Caco-2 (cell line): ENCODE measurements at regions of chr19 and their contacts with region 1.

Region 1: DNA sequence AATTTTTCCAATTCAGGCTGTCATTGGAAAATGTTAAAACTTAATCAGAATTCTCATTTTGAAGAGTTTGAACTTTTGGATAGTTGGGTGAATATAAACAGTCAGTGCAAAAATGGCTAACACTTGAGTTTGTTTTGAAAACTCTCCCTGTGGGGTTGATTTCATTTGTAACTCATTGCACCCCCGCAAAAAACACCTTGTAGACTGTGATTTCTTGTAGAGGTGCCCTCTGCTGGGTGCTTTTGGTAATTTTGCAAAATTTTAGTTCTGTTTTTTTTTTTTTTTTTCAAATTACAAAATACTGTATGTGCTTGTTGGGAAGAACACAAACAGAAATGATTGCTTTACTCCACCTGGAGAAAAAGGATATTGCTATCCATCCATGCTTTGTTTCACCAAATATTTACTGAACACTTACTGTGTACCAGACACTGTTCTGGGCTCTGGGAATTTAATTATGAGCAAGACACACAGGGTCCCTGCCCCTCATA is 28.2 kb upstream of the GPI start:
- DNase-seq: peak in 1 of 2 experiments; percentile 52
- H3K4me3 ChIP-seq: no peak overlapping the region
- H3K4me3 Mint-ChIP-seq: no peak overlapping the region
- H3K27ac Mint-ChIP-seq: no peak overlapping the region
- H3K4me1 ChIP-seq: peaks cover under 1% of the 10 kb centered on the region; the same call in 1 of the 2 replicates
- H3K4me1 Mint-ChIP-seq: no peaks in the 10 kb centered on the region
- H3K27me3 ChIP-seq: no peaks in the 10 kb centered on the region
- H3K27me3 Mint-ChIP-seq: no peaks in the 10 kb centered on the region
- CTCF ChIP-seq: peak; percentile 70 to 83

Region 2: DNA sequence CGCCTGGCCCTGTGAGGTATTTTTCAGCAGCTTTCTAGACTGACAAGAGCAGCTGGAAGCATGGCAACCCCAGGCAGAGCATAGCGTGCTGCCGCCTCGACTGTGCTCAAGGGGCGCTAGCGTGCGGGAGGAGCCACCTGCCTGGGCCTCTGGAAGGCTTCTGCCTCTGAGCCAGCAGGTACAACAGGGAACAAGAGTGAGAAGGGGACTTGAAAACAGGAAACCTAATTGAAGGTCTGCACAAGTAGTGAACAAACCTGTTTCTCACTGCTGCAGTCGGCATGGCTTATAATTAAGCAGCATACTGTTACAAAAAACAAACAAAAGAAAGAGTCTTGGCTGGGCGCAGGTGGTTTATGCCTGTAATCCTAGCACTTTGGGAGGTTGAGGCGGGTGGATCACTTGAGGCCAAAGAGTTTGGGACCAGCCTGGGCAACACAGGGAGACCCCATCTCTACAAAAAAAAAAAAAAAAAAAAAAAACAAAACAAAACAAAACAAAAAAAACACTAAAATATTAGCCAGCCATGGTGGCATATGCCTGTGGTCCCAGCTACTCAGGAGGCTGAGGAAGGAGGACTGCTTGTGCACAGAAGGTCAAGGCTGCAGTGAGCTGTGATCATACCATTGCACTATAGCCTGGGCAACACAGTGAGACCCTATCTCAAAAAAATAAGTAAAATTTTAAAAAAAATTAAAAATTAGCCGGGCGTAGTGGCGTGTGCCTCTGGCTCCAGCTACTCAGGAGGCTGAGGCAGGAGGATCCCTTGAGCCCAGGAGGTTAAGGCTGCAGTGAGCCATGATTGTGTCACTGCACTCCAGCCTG is 95.1 kb before region 1 on chr19:
- CTCF ChIA-PET with region 1: no interaction called
- POLR2A ChIA-PET with region 1: no interaction called
- intact Hi-C with region 1: loop called (anchors 5 kb)
- DNase-seq: peak; percentile 78 to 79
- H3K4me3 ChIP-seq: no peak overlapping the region
- H3K4me3 Mint-ChIP-seq: no peak overlapping the region
- H3K27ac Mint-ChIP-seq: peak overlapping the region; percentile 46
- H3K4me1 ChIP-seq: no peaks in the 10 kb centered on the region
- H3K4me1 Mint-ChIP-seq: peaks cover 15% of the 10 kb centered on the region
- H3K27me3 ChIP-seq: no peaks in the 10 kb centered on the region
- H3K27me3 Mint-ChIP-seq: no peaks in the 10 kb centered on the region
- CTCF ChIP-seq: peak; percentile 53 to 63

Region 3: DNA sequence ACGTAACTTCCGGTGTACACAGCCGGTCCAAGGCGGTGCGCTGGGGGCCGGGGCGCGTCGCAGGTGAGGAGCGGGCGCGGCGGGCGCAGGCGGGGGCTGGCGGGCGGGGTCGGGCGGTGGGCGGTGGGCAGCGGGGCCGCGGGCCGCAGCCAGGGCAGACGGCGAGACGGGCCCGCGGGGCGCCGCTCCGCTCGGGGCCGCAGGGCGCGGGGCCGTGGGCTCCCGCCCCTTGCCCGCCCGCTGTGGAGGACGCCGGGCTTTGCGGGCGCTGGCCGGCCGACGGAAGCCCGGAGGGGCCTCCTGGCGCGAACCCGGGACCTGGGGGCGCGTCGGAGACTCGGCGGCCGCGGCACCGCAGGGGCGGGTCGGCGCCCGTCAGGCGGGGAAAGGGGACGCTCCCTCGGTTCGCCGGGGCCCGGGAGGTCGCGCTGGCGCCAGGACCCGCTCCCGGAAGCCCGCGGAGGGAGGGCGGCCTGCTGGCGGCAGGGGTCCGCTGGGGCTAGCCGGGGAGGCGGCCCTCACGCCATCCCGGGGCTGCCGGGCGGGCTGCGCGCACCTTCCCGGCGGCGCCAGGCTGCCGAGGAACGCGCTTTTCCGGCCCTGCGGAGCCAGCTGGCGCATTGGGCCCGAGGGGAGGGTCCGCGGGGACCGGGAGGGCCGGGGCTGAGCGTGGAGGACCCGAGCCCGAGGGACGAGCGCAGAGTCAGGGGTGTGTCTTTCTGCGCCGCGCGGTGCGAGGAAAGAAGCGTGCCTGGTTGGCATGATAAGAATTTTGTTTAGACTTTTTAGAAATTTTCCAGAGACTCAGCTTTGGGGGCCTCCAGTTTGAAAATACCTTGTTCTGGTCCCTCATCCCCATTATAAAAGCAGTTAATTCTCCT is 82.0 kb before region 1 on chr19 and contains the start of gene GARRE1:
- CTCF ChIA-PET with region 1: interaction called, 4 read pairs
- POLR2A ChIA-PET with region 1: no interaction called
- intact Hi-C with region 1: loop called (anchors 5 kb)
- DNase-seq: peak; percentile 65 to 89
- H3K4me3 ChIP-seq: peak within 1 kb of the TSS; percentile 80
- H3K4me3 Mint-ChIP-seq: peak within 1 kb of the TSS; percentile 83
- H3K27ac Mint-ChIP-seq: peak within 1 kb of the TSS; percentile 91
- H3K4me1 ChIP-seq: peaks cover 26% of the 10 kb centered on the region
- H3K4me1 Mint-ChIP-seq: peaks cover 15% of the 10 kb centered on the region
- H3K27me3 ChIP-seq: no peaks in the 10 kb centered on the region
- H3K27me3 Mint-ChIP-seq: no peaks in the 10 kb centered on the region
- CTCF ChIP-seq: no peak
- total RNA-seq, gene GARRE1: 20.2 and 20.7 TPM in 2 replicates

Region 4: GRCh38 chr19:34298891-34299520 is 37.8 kb before region 1 on chr19:
- CTCF ChIA-PET with region 1: no interaction called
- POLR2A ChIA-PET with region 1: no interaction called
- intact Hi-C with region 1: loop called (anchors 1 kb)
- DNase-seq: peak in 1 of 2 experiments; percentile 28
- H3K4me3 ChIP-seq: no peak overlapping the region
- H3K4me3 Mint-ChIP-seq: no peak overlapping the region
- H3K27ac Mint-ChIP-seq: no peak overlapping the region
- H3K4me1 ChIP-seq: no peaks in the 10 kb centered on the region
- H3K4me1 Mint-ChIP-seq: no peaks in the 10 kb centered on the region
- H3K27me3 ChIP-seq: no peaks in the 10 kb centered on the region
- H3K27me3 Mint-ChIP-seq: no peaks in the 10 kb centered on the region
- CTCF ChIP-seq: no peak

Region 5: GRCh38 chr19:34351382-34351826 is 14.6 kb after region 1 on chr19:
- CTCF ChIA-PET with region 1: no interaction called
- POLR2A ChIA-PET with region 1: no interaction called
- intact Hi-C with region 1: no loop called
- DNase-seq: no peak
- H3K4me3 ChIP-seq: no peak overlapping the region
- H3K4me3 Mint-ChIP-seq: no peak overlapping the region
- H3K27ac Mint-ChIP-seq: no peak overlapping the region
- H3K4me1 ChIP-seq: no peaks in the 10 kb centered on the region
- H3K4me1 Mint-ChIP-seq: no peaks in the 10 kb centered on the region
- H3K27me3 ChIP-seq: no peaks in the 10 kb centered on the region
- H3K27me3 Mint-ChIP-seq: no peaks in the 10 kb centered on the region
- CTCF ChIP-seq: no peak